Mammary epithelial cell (primary cell): ENCODE measurements at regions of chr1 and their contacts with region 1.

Region 1: DNA sequence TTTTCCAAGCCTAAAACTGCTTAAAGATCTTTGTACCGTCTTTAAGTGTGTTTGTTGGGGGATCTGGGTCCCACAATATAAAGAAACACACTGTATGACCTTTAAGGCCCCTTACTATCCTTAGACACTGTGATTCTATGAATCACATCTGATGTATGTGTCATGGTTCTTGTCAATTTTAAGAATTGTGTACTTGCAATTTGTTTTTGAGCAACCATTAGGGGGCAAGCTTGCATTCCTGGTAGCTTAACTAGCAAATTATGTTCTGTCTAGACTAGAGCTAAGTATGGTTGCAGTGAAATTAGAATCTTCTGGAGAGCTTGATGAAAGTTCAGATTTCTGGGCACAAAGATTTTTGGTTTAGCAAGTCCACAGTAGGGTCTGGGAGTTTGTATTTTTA is 219.5 kb downstream of the TPR start:
- DNase-seq: peak; percentile 71
- H3K4me3 ChIP-seq: no peak overlapping the region
- H3K27ac ChIP-seq: no peak overlapping the region
- H3K4me1 ChIP-seq: peaks cover 37% of the 10 kb centered on the region
- H3K27me3 ChIP-seq: no peaks in the 10 kb centered on the region
- CTCF ChIP-seq: peak; percentile 76 to 79

Region 2: GRCh38 chr1:185720633-185721272 is 434.8 kb before region 1 on chr1:
- CTCF ChIA-PET with region 1: no interaction called
- dilution Hi-C with region 1: no loop called
- in situ Hi-C with region 1: no loop called
- intact Hi-C with region 1: loop called (anchors 2 kb)
- DNase-seq: peak; percentile 28
- H3K4me3 ChIP-seq: no peak overlapping the region
- H3K27ac ChIP-seq: peak overlapping the region; percentile 86
- H3K4me1 ChIP-seq: peaks cover 24% of the 10 kb centered on the region
- H3K27me3 ChIP-seq: no peaks in the 10 kb centered on the region
- CTCF ChIP-seq: peak; percentile 63 to 65

Region 3: DNA sequence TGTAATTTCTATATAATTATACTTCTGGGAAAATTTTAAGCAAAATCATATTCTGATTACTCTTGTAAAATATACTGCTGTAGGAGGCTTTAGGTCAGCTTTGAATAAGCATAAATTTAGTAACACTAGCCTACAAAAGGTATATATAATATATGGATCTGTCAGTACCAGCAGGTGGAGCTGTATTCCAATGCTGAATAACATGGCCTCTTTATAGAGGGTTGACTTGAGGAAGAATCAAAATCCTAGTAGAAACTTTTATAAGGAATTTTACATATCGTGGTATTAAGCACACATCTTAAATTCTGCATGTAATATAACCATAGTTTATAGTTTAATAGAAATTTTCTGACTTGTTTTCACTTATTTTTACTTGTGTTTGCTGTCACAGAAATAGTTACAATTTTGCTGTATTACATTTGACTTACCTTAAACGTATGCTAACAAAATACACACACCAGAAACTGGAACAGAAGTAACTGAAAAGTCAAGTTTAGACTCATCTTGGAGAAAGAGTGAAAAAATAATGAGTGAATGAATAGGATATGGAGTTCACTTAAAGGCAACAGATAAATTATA is 342.1 kb before region 1 on chr1:
- CTCF ChIA-PET with region 1: interaction called, 3 read pairs
- dilution Hi-C with region 1: no loop called
- in situ Hi-C with region 1: no loop called
- intact Hi-C with region 1: loop called (anchors 1 kb)
- DNase-seq: peak; percentile 45
- H3K4me3 ChIP-seq: no peak overlapping the region
- H3K27ac ChIP-seq: no peak overlapping the region
- H3K4me1 ChIP-seq: no peaks in the 10 kb centered on the region
- H3K27me3 ChIP-seq: no peaks in the 10 kb centered on the region
- CTCF ChIP-seq: peak; percentile 61 to 67

Region 4: GRCh38 chr1:185821612-185822385 is 333.8 kb before region 1 on chr1:
- CTCF ChIA-PET with region 1: no interaction called
- dilution Hi-C with region 1: no loop called
- in situ Hi-C with region 1: no loop called
- intact Hi-C with region 1: loop called (anchors 1 kb)
- DNase-seq: peak; percentile 10
- H3K4me3 ChIP-seq: no peak overlapping the region
- H3K27ac ChIP-seq: no peak overlapping the region
- H3K4me1 ChIP-seq: no peaks in the 10 kb centered on the region
- H3K27me3 ChIP-seq: no peaks in the 10 kb centered on the region
- CTCF ChIP-seq: peak in 1 of 2 donors; percentile 43

Region 5: GRCh38 chr1:186102557-186103148 is 52.9 kb before region 1 on chr1:
- CTCF ChIA-PET with region 1: no interaction called
- dilution Hi-C with region 1: no loop called
- in situ Hi-C with region 1: no loop called
- intact Hi-C with region 1: loop called (anchors 2 kb)
- DNase-seq: peak; percentile 55
- H3K4me3 ChIP-seq: no peak overlapping the region
- H3K27ac ChIP-seq: no peak overlapping the region
- H3K4me1 ChIP-seq: no peaks in the 10 kb centered on the region
- H3K27me3 ChIP-seq: no peaks in the 10 kb centered on the region
- CTCF ChIP-seq: no peak

Region 6: GRCh38 chr1:186315570-186315969 is 160.0 kb after region 1 on chr1:
- CTCF ChIA-PET with region 1: no interaction called
- dilution Hi-C with region 1: no loop called
- in situ Hi-C with region 1: no loop called
- intact Hi-C with region 1: loop called (anchors 10 kb)
- DNase-seq: no peak
- H3K4me3 ChIP-seq: no peak overlapping the region
- H3K27ac ChIP-seq: no peak overlapping the region
- H3K4me1 ChIP-seq: no peaks in the 10 kb centered on the region
- H3K27me3 ChIP-seq: no peaks in the 10 kb centered on the region
- CTCF ChIP-seq: no peak